GM10248 (cell line): ENCODE measurements at regions of chr12 and their contacts with region 1.

Region 1: GRCh38 chr12:53159195-53159839 is 21.2 kb upstream of the ZNF740 start:
- DNase-seq: peak; percentile 94
- CTCF ChIP-seq: peak; percentile 100

Region 2: DNA sequence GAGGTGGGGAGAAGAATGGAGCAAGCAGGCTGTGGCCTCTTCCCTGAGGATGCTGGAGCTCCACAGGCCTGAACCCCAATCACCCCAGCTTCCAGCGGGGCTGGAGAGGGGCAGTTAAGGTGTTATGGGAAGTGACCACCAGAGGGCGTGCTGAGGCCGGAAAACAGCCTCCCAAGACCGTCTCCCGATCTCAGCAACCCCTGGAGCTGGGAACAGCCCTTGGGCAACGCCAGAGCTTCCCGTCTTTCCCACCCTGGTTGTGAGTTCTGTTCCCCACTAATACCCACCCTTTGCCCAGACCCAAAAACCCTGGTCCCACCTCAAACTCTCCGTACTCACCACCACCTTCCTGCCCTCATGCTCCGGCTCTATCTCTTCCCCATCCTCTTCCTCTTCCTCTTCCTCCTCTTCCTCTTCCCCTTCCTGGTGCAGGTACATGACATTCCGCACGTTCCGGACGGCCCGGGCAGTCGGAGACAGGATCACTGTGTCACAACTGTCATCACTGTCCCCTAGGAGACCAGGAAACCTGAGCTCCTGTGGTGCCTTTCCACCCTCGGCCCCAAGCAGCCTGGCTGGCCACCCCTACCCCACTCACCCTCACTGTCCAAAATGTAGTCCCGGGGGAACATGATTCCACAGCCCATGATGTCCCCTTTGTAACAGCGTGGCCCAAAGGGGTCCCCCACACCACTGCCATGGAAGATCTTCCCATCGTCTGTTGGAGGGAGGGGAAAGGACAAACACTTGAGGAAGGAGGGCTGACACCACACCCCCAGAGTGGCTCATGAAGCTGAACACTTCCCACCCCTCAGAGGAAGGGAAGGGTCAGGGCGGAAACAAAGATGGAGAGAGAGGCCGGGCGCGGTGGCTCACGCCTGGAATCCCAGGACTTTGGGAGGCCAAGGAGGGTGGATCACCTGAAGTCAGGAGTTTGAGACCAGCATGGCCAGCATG is 93.1 kb before region 1 on chr12:
- CTCF ChIA-PET with region 1: interaction called, 20 read pairs
- POLR2A ChIA-PET with region 1: no interaction called
- DNase-seq: peak; percentile 86
- CTCF ChIP-seq: peak; percentile 90

Region 3: DNA sequence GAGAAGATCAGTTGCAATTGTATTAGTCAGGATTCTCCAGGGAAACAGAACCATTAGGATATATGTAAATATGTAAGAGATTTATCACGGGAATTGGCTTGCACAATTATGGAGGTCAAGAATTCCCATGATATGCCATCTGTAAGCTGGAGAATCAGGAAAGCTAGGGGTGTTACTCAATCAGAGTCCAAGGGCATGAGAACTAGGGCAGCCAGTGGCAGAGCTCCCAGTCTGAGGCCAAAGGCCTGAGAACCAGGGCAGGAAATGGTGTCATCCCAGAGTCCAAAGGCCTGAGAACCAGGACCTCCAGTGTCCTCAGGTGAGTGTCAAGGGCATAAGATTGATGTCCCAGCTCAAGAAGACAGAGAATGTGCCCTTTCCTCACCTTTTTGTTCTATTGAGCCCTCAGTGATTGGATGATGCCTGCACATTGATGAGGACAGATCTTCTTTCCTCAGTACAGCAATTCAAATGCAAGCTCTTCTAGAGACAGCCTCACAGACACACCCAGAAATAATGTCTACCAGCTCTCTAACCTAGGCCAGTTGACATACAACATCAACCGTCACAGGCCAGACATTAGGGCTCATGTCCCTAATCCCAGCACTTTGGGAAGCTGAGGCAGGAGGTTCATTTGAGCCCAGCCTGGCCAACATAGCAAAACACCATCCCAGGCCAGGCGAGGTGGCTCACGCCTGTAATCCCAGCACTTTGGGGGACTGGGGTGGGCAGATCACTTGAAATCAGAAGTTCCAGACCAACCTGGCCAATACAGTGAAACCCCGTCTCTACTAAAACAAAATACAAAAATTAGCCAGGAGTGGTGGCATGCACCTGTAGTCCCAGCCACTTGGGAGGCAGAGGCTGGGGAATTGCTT is 13.7 kb before region 1 on chr12:
- CTCF ChIA-PET with region 1: interaction called, 14 read pairs
- POLR2A ChIA-PET with region 1: no interaction called
- DNase-seq: no peak
- CTCF ChIP-seq: no peak

Region 4: GRCh38 chr12:53190108-53190729 is 30.9 kb after region 1 on chr12:
- CTCF ChIA-PET with region 1: interaction called, 147 read pairs
- POLR2A ChIA-PET with region 1: no interaction called
- DNase-seq: peak; percentile 61
- CTCF ChIP-seq: peak; percentile 76

Region 5: DNA sequence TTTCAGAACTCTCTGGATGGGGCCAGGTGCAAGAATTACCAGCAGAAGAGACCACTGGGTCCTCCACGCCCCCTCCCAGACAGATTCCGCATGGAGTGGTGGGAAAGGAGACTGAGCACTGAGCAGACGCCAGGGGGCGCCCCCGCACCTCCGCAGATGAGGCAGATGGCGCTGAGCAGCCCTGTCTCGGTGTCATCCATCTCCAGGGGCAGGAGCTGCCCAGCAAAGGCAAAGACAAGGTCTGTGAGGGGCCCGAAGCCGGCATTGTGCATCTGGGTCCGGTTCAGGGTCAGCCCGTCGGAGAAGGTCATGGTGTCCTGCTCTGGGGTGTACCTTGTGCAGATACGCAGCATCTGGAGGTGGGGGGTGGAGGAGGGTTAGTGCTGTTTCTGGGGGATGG is 54.0 kb after region 1 on chr12:
- CTCF ChIA-PET with region 1: interaction called, 18 read pairs
- POLR2A ChIA-PET with region 1: no interaction called
- DNase-seq: peak; percentile 81
- CTCF ChIP-seq: peak; percentile 91

Region 6: GRCh38 chr12:53267999-53268647 is 108.8 kb after region 1 on chr12 and contains the start of gene ESPL1:
- CTCF ChIA-PET with region 1: interaction called, 31 read pairs
- POLR2A ChIA-PET with region 1: no interaction called
- DNase-seq: peak; percentile 92
- CTCF ChIP-seq: peak; percentile 39

Region 7: DNA sequence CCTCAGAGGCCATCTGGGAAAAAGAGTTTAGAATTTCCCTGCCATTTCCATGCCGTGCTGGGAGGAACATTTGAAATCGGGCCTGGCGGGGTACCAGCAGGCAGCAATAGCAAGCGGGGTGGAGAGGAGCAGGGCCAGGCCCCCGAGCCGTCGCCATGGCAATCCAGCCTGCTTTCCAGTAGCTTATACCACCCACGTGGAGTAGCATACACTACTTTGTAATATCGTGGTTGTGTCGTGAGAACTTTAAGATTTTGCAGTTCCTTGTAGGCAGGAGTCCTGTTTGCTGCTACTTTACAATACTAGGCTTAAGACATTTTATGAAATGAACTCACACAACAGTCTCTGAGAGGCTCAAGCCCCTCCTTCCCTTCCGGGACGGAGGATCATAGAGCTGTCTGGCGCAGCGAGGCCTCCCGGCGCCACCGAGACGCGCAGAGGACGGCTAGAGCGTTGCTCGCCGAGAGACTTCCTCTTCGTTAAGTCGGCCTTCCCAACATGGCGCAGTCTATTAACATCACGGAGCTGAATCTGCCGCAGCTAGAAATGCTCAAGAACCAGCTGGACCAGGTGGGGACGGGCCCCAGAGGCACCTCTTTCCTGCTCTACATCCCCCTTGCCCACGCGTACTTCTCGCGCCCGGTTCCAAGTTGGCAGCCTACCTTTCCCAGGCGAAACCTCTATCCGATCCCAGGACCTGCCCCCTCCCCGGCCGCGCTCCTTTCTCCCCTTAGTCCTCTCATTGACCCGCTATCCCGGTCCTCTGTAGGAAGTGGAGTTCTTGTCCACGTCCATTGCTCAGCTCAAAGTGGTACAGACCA is 136.0 kb after region 1 on chr12 and contains the start of gene PFDN5:
- CTCF ChIA-PET with region 1: interaction called, 59 read pairs
- POLR2A ChIA-PET with region 1: no interaction called
- DNase-seq: peak; percentile 92
- CTCF ChIP-seq: no peak

Region 8: GRCh38 chr12:53383096-53383657 is 223.9 kb after region 1 on chr12:
- CTCF ChIA-PET with region 1: no interaction called
- POLR2A ChIA-PET with region 1: no interaction called
- DNase-seq: no peak
- CTCF ChIP-seq: no peak